Motor neuron (in vitro differentiated cells): ENCODE measurements at regions of chr2 and their contacts with region 1.

Region 1: GRCh38 chr2:40554668-40555285 is 102.9 kb upstream of the SLC8A1 start:
- ATAC-seq: peak in 4 of 8 experiments; percentile 54 to 83 (median 70)
- H3K4me3 ChIP-seq: no peak overlapping the region
- H3K27ac ChIP-seq: no peak overlapping the region
- H3K4me1 ChIP-seq: peaks cover 0 to 5% of the 10 kb centered on the region in 2 donors

Region 2: DNA sequence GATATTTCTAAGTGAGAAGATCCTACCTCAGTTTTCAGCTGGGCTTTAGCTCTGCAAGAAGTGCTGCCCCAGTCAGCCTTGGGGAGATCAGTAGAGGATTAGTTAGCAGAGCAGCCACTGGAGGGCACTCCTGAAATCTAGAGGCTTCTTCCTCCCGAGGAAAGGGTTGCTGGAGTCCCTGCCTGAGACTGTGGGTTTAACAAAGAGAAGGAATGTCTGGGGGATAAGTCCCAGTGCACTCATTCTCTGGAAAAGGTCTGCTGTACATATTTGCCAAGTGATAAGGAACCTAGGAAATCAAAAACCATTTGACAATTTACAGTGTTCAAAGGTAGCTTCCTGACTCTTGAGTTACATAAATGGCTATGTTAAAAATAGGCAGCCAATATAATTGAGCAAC is 310.1 kb before region 1 on chr2:
- in situ Hi-C with region 1: loop called in 1 of 9 experiments (anchors 25 kb)
- ATAC-seq: peak; percentile 43 to 83 (median 61)
- H3K4me3 ChIP-seq: no peak overlapping the region
- H3K27ac ChIP-seq: no peak overlapping the region
- H3K4me1 ChIP-seq: peaks cover 22 to 25% of the 10 kb centered on the region in 2 donors

Region 3: DNA sequence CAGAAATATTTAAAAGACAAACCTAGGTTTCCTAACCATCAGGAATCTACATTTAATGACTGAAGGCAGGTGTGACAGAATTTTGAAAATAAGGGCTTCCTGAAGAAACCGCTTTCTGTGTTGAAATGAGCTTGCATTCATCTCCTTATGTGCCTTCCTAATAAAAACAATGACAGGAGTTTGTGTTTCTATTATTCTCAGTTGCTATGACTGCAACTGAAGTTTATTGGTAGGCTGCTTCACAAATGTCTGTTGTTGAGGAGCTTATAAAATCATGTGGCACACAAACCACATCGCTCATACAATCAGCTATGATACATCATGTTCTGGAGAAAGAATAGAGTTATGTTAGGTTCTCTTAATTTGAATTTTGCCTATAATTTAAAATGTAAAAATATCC is 259.8 kb after region 1 on chr2:
- in situ Hi-C with region 1: no loop called
- ATAC-seq: peak in 1 of 8 experiments; percentile 45
- H3K4me3 ChIP-seq: no peak overlapping the region
- H3K27ac ChIP-seq: no peak overlapping the region
- H3K4me1 ChIP-seq: no peaks in the 10 kb centered on the region